Naive thymus-derived CD4-positive, alpha-beta T cell (primary cell): ENCODE measurements at regions of chr12 and their contacts with region 1.

Region 1: DNA sequence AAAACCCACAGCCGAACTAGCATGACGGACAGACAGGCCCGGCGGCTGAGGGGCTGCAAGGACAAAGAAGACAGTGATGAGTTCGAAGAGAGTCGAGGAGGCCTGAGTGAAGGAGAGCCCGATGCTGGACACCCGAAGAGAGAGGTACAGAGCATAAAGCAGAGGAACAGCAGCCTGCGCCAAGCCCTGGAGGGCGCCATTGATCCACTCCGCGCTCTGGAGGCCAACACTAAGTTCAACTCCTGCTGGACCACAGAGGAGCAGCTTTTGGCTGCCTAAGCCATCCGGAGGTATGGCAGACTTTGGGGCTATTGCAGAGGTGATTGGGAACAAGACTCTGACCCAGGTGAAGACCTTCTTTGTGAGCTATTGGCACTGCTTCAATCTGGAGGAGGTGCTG is 7.8 kb upstream of the PLXNC1 start:
- DNase-seq: peak in 6 of 9 donors; percentile 28 to 57 (median 39)
- ATAC-seq: peak; percentile 64
- H3K4me3 ChIP-seq: no peak overlapping the region
- H3K4me3 Mint-ChIP-seq: no peak overlapping the region
- H3K27ac ChIP-seq: no peak overlapping the region
- H3K27ac Mint-ChIP-seq: peak overlapping the region in 1 of 9 donors; percentile 79
- H3K4me1 ChIP-seq: no peaks in the 10 kb centered on the region
- H3K4me1 Mint-ChIP-seq: peaks cover 0 to 2% (median under 1%) of the 10 kb centered on the region in 7 donors
- H3K27me3 ChIP-seq: no peaks in the 10 kb centered on the region
- H3K27me3 Mint-ChIP-seq: peaks cover 0 to 13% (median 0%) of the 10 kb centered on the region in 5 donors

Region 2: DNA sequence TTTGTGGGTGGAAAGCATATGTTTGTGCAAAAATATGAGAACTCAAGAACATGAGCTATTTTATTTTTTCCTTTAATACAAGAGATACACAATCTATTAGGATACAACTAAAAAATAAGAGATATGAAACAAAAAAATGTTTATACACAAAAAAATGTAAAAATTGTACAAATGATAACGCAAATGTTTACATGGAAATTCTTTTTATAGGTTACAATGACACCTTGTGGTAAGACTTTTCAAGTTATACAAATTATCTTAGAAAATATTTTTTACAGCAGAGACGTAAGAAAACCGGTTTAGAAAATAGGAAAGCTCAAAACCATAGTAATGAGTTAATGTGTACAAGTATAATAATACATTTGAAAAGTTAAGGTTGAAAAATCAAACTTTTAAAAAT is 293.6 kb after region 1 on chr12:
- CTCF ChIA-PET with region 1: no interaction called
- POLR2A ChIA-PET with region 1: no interaction called
- intact Hi-C with region 1: loop called (anchors 1 kb)
- DNase-seq: no peak
- ATAC-seq: no peak
- H3K4me3 ChIP-seq: no peak overlapping the region
- H3K4me3 Mint-ChIP-seq: no peak overlapping the region
- H3K27ac ChIP-seq: no peak overlapping the region
- H3K27ac Mint-ChIP-seq: no peak overlapping the region
- H3K4me1 ChIP-seq: peaks cover 0 to 9% of the 10 kb centered on the region in 2 donors
- H3K4me1 Mint-ChIP-seq: peaks cover 12 to 27% (median 22%) of the 10 kb centered on the region in 7 donors
- H3K27me3 ChIP-seq: no peaks in the 10 kb centered on the region
- H3K27me3 Mint-ChIP-seq: no peaks in the 10 kb centered on the region